Motor neuron (in vitro differentiated cells): ENCODE measurements at regions of chr6 and their contacts with region 1.

Region 1: DNA sequence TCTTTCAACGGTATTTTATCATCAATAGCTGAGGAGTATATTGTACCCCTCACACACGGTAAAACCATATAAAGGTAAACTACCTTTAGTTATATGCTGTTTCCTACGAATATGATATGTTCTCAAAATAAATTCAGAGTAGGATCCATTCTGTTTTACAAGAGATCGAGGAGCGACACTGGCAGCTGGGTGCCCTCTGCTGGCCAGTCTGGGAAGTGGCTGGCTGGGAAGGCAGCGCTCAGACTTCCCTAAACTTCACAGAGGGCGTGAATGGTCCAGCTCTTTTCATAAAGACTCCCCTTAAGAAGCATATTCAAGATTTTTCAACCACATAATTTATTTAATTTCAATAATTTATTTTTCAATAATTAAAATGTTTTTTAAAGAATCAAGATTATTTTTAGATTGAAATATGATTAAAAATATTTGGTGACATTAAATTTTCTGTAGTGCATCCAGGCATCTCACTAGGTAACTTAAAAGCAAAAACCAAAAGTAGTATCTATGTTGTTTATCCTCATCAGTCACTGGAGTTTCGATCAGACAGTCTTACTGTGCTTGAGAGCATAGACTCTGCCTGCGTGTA is 187.5 kb upstream of the PDE10A start:
- ATAC-seq: peak; percentile 42 to 87 (median 62)
- H3K4me3 ChIP-seq: no peak overlapping the region
- H3K27ac ChIP-seq: no peak overlapping the region
- H3K4me1 ChIP-seq: peaks cover 34 to 44% of the 10 kb centered on the region in 2 donors

Region 2: DNA sequence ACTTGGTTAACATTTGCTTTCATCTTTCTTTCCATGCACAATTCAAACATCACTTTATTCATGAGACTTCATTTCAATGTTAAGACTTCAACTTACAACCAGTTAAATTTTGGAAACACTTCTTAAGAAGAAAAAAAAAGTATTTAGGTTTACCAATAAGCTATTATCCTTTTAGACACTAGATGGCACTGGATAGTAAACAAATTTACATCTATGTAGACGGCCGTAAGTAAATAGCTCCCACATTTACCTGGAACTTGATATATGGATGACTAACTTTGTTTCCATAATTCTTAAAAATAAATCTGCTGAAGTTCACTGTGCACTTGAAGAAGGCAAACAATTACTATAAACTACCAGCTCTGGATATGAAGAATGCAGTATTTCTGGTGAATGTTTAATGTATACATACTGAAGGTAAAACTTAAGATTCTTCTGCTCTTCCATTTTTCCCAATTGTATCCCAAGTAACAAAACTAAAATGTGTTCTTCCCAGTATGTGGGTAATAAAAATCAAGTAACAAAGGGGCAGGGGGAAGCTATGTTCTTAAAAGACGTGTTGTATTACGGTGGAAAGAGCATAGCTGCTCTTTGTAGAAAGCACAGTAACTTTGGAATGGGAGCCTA is 410.5 kb before region 1 on chr6:
- in situ Hi-C with region 1: loop called in 5 of 9 experiments (anchors 25 kb)
- ATAC-seq: peak in 3 of 8 experiments; percentile 23 to 41 (median 39)
- H3K4me3 ChIP-seq: no peak overlapping the region
- H3K27ac ChIP-seq: no peak overlapping the region
- H3K4me1 ChIP-seq: no peaks in the 10 kb centered on the region

Region 3: DNA sequence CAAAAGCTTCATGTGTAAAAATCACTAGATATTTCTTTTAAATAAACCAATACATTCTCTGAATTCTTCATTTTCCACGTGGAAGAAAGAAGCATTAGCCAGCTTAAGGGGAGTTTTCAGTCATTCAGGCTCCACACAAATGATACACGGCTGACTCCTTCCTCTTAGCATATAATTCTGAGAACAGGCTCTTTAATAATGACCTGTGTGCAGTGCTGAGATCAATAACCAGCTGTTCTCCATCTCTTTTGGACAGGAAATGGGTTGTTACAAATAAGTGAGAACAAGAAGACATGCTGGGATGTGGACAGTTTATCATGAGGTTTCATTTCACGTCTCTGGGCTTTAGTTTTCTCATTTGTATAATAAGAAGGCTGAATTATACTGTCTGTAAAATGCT is 394.2 kb before region 1 on chr6:
- in situ Hi-C with region 1: loop called in 1 of 9 experiments (anchors 10 kb)
- ATAC-seq: peak in 5 of 8 experiments; percentile 48 to 85 (median 60)
- H3K4me3 ChIP-seq: no peak overlapping the region
- H3K27ac ChIP-seq: no peak overlapping the region
- H3K4me1 ChIP-seq: peaks cover 0 to 11% of the 10 kb centered on the region in 2 donors

Region 4: DNA sequence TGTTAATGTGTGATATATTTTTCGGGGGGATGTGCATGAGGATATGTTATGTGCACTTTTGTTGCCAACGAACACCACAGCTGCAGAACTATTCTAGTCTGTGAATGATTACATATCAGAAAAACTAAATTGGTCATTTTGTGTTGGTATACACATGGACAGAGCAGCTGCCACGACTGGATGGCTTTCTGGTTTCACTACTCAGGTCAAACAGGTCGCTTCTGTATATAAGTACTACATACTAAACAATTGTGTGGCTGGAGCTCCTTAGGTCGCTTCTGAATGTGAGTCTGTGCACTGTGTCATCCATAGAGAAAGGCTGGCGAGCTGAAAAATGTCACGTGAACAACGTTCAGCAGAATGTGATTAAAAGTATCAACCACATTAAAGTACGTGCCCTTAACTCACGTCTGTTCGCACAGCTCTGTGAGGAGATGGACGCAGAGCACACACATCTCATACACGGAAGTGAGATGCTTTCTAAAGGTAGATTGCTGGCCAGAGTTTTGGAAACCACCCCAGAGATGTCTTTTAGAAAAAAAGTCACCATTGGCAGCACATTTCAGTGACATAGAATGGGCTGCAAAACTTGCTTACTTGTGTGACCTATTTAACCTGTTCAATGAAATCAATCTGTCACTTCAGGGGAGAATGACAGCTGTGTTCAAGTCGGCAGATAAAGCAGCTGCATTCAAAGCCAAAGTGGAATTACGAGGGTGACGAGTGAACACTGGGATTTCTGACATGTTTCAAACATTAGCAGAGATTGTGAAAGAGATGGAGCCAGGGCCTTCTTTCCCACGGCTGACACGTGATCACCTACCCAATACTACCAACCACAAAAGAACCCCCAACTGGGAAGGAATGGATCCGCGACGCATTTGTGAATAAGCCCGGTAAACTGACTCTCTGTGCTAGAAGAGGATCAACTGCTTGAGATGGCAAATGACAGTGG is 364.1 kb before region 1 on chr6:
- in situ Hi-C with region 1: no loop called
- ATAC-seq: peak in 2 of 8 experiments; percentile 23 to 24
- H3K4me3 ChIP-seq: no peak overlapping the region
- H3K27ac ChIP-seq: no peak overlapping the region
- H3K4me1 ChIP-seq: peaks cover 0 to 5% of the 10 kb centered on the region in 2 donors

Region 5: DNA sequence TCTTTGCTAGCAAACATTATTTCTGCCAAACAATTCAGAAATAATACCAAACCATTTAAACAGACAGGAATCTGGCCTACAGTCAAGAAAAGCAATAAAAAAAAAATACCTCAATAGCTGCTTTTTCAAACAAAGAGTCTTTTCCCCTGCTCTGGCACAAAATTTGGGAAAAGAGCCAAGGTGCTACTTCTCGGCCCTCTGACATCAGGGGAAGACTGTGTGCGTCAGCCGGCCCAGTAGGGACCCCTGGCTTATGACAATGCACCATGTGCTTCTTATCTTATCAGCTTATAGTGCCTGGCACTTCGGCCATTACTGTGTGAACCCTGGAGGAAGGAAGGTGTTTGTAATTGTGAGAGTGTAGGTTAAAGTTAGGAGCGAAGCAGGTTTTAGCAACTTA is 276.9 kb before region 1 on chr6:
- in situ Hi-C with region 1: no loop called
- ATAC-seq: peak in 1 of 8 experiments; percentile 55
- H3K4me3 ChIP-seq: no peak overlapping the region
- H3K27ac ChIP-seq: no peak overlapping the region
- H3K4me1 ChIP-seq: no peaks in the 10 kb centered on the region

Region 6: DNA sequence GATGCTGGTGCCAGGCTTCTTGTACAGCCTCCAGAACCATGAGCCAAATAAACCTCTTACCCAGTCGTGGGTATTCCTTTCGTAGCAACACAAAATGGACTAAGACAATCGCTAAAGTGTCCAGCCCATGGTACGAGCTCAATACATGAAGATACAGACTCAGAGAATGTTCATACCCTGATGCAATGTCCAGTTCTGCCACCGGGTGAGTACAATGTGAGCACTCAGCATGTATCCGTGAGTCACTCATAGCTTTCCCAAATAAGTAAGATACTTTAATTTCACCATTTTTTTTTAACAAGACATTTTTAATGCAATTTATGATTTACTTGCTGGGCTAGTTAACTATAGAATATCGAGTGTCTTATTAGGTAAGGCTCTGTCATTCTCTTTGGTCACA is 160.8 kb before region 1 on chr6:
- in situ Hi-C with region 1: no loop called
- ATAC-seq: no peak
- H3K4me3 ChIP-seq: no peak overlapping the region
- H3K27ac ChIP-seq: no peak overlapping the region
- H3K4me1 ChIP-seq: no peaks in the 10 kb centered on the region

Region 7: GRCh38 chr6:166045173-166045859 is 194.8 kb after region 1 on chr6:
- in situ Hi-C with region 1: no loop called
- ATAC-seq: no peak
- H3K4me3 ChIP-seq: no peak overlapping the region
- H3K27ac ChIP-seq: no peak overlapping the region
- H3K4me1 ChIP-seq: peaks cover 10 to 13% of the 10 kb centered on the region in 2 donors